Activated CD4-positive, alpha-beta T cell treated with anti-CD3 and anti-CD28 coated beads, Interleukin-2, amount 10 ng/mL, durations not matched to agents 7 days and 5 days (primary cell): ENCODE measurements at regions of chr16 and their contacts with region 1.

Region 1: DNA sequence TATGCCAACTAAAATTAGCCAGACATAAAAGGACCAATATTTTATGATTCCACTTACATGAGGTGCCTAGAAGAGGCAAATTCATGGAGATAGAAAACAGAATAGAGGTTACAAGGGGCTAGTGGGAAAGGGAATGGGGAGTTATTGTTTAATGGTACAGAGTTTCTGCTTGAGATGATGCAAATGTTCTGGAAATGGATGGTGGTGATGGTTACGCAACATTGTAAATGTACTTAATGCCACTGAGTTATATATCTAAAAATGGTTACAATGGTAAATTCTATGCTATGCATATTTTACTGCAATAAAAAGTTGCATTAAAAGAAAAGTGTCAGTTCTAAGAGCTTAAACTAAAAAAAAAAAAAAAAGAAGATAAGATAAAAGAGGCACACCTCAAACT is 17.9 kb downstream of the MT1X start:
- DNase-seq: no peak
- H3K4me3 Mint-ChIP-seq: no peak overlapping the region
- H3K27ac Mint-ChIP-seq: no peak overlapping the region
- H3K4me1 Mint-ChIP-seq: peaks cover 11% of the 10 kb centered on the region
- H3K27me3 Mint-ChIP-seq: peaks cover 4% of the 10 kb centered on the region

Region 2: DNA sequence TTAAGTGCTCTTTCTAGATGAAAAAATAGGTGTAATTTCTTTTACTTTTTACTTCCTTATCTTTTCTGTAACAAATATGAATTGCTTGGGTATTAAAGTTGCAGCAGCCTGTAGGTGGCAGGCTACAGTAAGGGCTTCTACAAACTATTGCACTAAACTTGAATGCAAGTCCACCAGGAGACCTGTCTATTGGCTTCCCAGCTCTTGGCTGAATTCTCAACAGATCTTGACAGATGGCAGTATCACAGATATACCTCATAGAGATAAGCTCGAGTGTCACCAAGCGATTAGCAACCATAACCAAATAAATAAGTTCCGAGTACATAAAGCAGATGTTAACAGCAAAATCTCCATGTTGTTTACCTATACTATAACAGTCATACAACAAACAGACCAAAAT is 186.2 kb before region 1 on chr16:
- CTCF ChIA-PET with region 1: interaction called, 17 read pairs
- POLR2A ChIA-PET with region 1: no interaction called
- DNase-seq: peak; percentile 62
- H3K4me3 Mint-ChIP-seq: no peak overlapping the region
- H3K27ac Mint-ChIP-seq: no peak overlapping the region
- H3K4me1 Mint-ChIP-seq: peaks cover 10% of the 10 kb centered on the region
- H3K27me3 Mint-ChIP-seq: no peaks in the 10 kb centered on the region

Region 3: DNA sequence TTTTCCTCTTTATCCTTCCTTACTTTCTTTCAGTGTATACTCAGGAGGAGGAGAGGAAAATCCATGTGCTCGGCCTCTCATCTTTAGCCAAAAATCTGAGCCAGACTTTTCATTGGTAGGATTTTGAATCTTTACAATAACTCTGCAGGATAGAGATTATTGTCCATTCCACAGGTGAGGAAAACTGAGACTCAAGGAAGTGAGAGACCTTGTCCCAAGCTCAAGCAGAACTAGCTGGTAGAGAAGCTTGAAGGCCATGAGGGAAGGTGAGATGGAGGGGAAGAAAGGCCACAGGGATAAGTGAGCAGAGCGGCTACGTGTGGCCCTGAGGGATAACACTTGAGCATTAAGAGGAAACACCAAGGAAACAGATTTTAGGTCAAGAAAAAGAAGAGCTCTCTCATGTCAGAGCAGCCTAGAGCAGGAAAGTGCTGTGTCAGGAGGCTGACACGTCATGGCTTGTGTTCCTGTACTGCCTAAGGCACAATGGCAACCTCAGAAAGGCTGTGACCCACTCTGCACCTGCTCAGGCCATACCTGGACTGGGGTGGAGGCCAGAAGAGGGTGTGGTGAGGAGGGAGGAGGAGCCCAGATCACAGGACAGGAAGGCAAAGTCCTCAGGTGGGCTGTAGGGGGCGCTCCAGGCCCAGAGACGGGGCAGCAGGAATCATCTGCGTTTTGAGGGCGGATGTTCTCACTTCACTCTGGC is 123.5 kb before region 1 on chr16:
- CTCF ChIA-PET with region 1: interaction called, 41 read pairs
- POLR2A ChIA-PET with region 1: no interaction called
- DNase-seq: peak; percentile 91
- H3K4me3 Mint-ChIP-seq: no peak overlapping the region
- H3K27ac Mint-ChIP-seq: peak overlapping the region; percentile 78
- H3K4me1 Mint-ChIP-seq: peaks cover 9% of the 10 kb centered on the region
- H3K27me3 Mint-ChIP-seq: peaks cover 13% of the 10 kb centered on the region

Region 4: GRCh38 chr16:56657555-56658326 is 42.5 kb before region 1 on chr16 and contains the start of gene MT1F:
- CTCF ChIA-PET with region 1: no interaction called
- POLR2A ChIA-PET with region 1: no interaction called
- DNase-seq: peak; percentile 74
- H3K4me3 Mint-ChIP-seq: peak within 1 kb of the TSS; percentile 92
- H3K27ac Mint-ChIP-seq: peak within 1 kb of the TSS; percentile 87
- H3K4me1 Mint-ChIP-seq: peaks cover 30% of the 10 kb centered on the region
- H3K27me3 Mint-ChIP-seq: peaks cover 10% of the 10 kb centered on the region
- total RNA-seq, gene MT1F: 19.6 to 24.3 TPM

Region 5: GRCh38 chr16:56675685-56676210 is 24.4 kb before region 1 on chr16:
- CTCF ChIA-PET with region 1: interaction called, 13 read pairs
- POLR2A ChIA-PET with region 1: no interaction called
- DNase-seq: peak; percentile 60
- H3K4me3 Mint-ChIP-seq: peak overlapping the region; percentile 56
- H3K27ac Mint-ChIP-seq: peak overlapping the region; percentile 70
- H3K4me1 Mint-ChIP-seq: peaks cover 25% of the 10 kb centered on the region
- H3K27me3 Mint-ChIP-seq: peaks cover 43% of the 10 kb centered on the region

Region 6: DNA sequence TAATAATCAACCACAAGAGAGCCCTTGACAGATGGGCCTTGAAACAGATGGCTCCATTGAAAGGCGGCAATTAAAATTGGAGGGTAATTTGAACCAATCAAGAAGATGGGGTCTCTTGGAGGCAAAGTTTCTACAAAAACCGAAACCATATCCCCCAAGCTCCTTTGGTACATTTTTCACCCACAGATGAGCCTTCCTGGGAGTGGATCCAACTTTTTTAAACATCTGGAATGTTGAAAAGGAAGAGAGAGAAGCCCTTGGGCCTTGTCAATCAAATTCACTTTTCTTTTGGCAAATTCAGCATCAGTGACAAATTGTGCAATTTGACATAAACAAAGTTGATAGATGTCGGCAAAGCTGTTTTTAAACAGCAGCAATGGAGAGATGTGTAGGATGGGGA is 16.6 kb after region 1 on chr16:
- CTCF ChIA-PET with region 1: interaction called, 21 read pairs
- POLR2A ChIA-PET with region 1: no interaction called
- DNase-seq: no peak
- H3K4me3 Mint-ChIP-seq: no peak overlapping the region
- H3K27ac Mint-ChIP-seq: no peak overlapping the region
- H3K4me1 Mint-ChIP-seq: no peaks in the 10 kb centered on the region
- H3K27me3 Mint-ChIP-seq: peaks cover 6% of the 10 kb centered on the region

Region 7: GRCh38 chr16:56781528-56781961 is 81.3 kb after region 1 on chr16:
- CTCF ChIA-PET with region 1: no interaction called
- POLR2A ChIA-PET with region 1: no interaction called
- DNase-seq: no peak
- H3K4me3 Mint-ChIP-seq: no peak overlapping the region
- H3K27ac Mint-ChIP-seq: no peak overlapping the region
- H3K4me1 Mint-ChIP-seq: peaks cover 29% of the 10 kb centered on the region
- H3K27me3 Mint-ChIP-seq: no peaks in the 10 kb centered on the region